H1 (cell line): ENCODE measurements at regions of chr4 and their contacts with region 1.

Region 1: GRCh38 chr4:117134386-117134785 is 49.0 kb upstream of the TRAM1L1 start:
- DNase-seq: no peak
- H3K4me3 ChIP-seq: no peak overlapping the region
- H3K27ac ChIP-seq: no peak overlapping the region
- H3K4me1 ChIP-seq: no peaks in the 10 kb centered on the region
- H3K27me3 ChIP-seq: no peaks in the 10 kb centered on the region
- CTCF ChIP-seq: peak in 2 of 3 experiments; percentile 54 to 67; a peak in 3 of 4 replicates
- EP300 ChIP-seq: no peak
- POLR2A ChIP-seq: no peak
- RAD21 ChIP-seq: peak; percentile 91 to 92

Region 2: DNA sequence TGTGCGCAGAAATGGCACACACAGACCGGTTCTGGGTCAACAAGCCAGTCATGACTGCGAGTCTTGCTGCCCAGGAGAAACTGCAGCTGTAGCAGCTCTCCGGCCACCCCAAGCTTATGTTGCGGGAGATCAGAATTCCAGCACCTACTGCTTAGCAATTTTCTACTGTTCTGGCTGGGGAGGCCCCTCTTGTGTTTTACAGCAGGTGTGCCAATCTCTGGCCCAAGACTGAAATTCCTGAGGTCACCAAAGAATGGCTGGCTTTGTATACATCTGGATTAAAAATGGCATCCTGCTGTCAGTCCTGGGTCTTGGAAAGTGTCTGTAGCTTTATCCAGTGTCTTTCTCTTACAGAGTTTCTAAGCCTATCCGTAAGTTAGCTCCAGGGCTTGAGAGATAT is 19.9 kb after region 1 on chr4:
- CTCF ChIA-PET with region 1: no interaction called
- POLR2A ChIA-PET with region 1: no interaction called
- DNase-seq: no peak
- H3K4me3 ChIP-seq: no peak overlapping the region
- H3K27ac ChIP-seq: peak overlapping the region; percentile 63; the same call in 1 of the 2 replicates
- H3K4me1 ChIP-seq: peaks cover 0 to 4% (median 0%) of the 10 kb centered on the region in 4 experiments; a peak in 3 of 7 replicates
- H3K27me3 ChIP-seq: no peaks in the 10 kb centered on the region
- CTCF ChIP-seq: no peak
- EP300 ChIP-seq: no peak
- POLR2A ChIP-seq: no peak
- RAD21 ChIP-seq: no peak

Region 3: GRCh38 chr4:117700111-117700892 is 565.9 kb after region 1 on chr4:
- CTCF ChIA-PET with region 1: interaction called, 13 read pairs
- POLR2A ChIA-PET with region 1: no interaction called
- DNase-seq: no peak
- H3K4me3 ChIP-seq: no peak overlapping the region
- H3K27ac ChIP-seq: no peak overlapping the region
- H3K4me1 ChIP-seq: no peaks in the 10 kb centered on the region
- H3K27me3 ChIP-seq: no peaks in the 10 kb centered on the region
- CTCF ChIP-seq: peak in 2 of 3 experiments; percentile 49 to 66; a peak in 2 of 4 replicates
- EP300 ChIP-seq: no peak
- POLR2A ChIP-seq: no peak
- RAD21 ChIP-seq: peak; percentile 54

Region 4: DNA sequence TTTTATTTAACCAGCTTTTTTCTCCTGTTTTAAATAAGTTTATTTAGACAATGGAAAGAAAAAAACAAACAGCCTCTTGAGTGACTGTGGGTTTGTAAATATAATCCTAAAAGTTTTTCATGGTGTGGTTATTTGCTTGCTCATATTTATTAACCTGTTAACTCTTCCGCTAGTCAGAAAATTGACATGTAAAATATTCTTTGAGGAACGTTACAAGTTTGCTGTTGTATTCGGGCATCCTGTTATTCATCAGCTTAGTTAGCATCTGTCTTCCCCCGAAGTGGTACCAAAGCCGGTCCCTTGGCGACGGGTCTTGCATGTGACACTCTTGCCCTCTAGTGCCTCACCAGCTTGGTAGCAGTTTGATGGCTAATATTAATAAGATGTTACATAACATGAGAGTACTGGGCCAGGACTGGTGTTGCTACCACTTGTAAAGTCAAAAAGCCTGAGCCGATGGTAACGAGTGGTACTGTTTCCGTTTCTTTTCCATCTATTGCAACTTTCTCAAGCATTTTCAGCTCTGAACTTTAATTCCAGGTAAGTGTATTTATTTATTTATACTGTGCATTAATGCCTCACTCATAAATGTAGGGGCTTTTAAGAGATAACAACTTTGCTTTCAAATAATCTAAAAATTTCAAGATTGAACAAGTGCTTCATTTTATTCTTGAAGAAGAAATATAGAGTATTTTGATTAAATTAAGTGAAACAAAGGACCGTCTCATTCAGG is 899.8 kb after region 1 on chr4 and contains the start of gene NDST3:
- CTCF ChIA-PET with region 1: interaction called, 11 read pairs
- POLR2A ChIA-PET with region 1: no interaction called
- DNase-seq: peak in 1 of 2 experiments; percentile 64
- H3K4me3 ChIP-seq: peak within 1 kb of the TSS; percentile 53 to 80 (median 55)
- H3K27ac ChIP-seq: no peak within 1 kb of the TSS
- H3K4me1 ChIP-seq: no peaks in the 10 kb centered on the region; a peak in 1 of 7 replicates
- H3K27me3 ChIP-seq: peaks cover 0 to 2% (median under 1%) of the 10 kb centered on the region in 4 experiments; a peak in 1 of 7 replicates
- CTCF ChIP-seq: peak; percentile 63 to 82 (median 82)
- EP300 ChIP-seq: no peak
- POLR2A ChIP-seq: no peak
- RAD21 ChIP-seq: peak; percentile 97 to 98
- total RNA-seq, gene NDST3: 0.60 and 0.71 TPM in 2 replicates